PC-3 (cell line): ENCODE measurements at regions of chr6 and their contacts with region 1.

Region 1: DNA sequence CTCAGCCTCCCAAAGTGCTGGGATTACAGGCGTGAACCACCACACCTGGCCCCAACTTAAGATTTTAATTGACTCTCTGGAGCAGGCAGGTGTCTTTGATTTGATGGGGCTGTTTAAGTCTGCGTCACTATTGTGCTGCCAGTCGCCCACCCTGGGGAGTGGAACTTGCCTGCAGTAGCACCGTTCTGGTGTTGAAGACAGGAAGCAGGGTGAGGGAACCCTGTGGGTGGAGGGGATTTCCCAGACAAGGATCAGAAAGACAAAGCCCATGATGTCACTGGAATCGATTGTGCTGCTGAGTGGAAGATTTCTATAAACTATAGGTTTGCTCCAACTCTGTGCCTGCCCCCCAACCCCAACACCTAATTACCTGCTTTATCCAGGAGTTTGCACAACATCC is 11.0 kb downstream of the ALDH8A1 start:
- DNase-seq: no peak
- ATAC-seq: no peak
- H3K4me3 ChIP-seq: no peak overlapping the region
- H3K27ac ChIP-seq: no peak overlapping the region
- H3K4me1 ChIP-seq: peaks cover 8% of the 10 kb centered on the region
- H3K27me3 ChIP-seq: no peaks in the 10 kb centered on the region
- CTCF ChIP-seq: no peak

Region 2: DNA sequence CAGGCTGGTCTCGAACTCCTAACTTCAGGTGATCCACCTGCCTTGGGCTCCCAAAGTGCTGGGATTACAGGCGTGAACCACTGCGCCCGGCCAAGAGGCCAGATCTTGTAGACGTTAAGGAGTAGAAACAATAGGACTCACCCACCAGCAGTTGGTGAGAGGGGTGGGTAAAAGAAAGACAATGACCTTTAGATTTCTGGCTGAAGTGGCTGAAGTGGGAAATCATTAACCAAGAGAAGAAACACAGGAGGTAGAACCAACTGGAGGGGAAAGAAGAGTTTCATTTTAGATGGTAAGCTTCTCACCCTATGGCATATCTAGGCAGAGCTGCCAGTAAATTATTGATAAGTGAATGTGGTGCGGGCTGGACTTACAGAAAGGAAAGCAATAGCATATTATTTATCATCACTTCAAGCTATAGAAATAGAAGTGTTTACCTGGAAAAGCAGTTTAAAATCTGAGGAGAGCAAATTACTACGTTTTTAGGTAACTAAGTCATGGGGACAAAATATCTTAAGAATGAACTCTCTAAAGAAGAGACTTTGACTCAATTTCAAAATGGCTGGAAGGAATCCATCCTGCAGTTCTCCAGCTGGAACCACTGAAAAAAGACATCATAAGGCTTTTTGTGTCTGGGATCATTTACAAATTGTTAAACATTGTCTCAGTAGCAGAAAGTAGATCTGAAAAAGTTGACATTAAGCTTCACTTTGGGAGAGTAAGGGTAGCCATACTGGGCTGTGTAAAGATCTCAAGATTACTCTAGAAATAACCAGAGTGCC is 98.6 kb before region 1 on chr6:
- CTCF ChIA-PET with region 1: no interaction called
- POLR2A ChIA-PET with region 1: no interaction called
- intact Hi-C with region 1: no loop called
- DNase-seq: no peak
- ATAC-seq: no peak
- H3K4me3 ChIP-seq: no peak overlapping the region
- H3K27ac ChIP-seq: no peak overlapping the region
- H3K4me1 ChIP-seq: no peaks in the 10 kb centered on the region
- H3K27me3 ChIP-seq: no peaks in the 10 kb centered on the region
- CTCF ChIP-seq: no peak

Region 3: DNA sequence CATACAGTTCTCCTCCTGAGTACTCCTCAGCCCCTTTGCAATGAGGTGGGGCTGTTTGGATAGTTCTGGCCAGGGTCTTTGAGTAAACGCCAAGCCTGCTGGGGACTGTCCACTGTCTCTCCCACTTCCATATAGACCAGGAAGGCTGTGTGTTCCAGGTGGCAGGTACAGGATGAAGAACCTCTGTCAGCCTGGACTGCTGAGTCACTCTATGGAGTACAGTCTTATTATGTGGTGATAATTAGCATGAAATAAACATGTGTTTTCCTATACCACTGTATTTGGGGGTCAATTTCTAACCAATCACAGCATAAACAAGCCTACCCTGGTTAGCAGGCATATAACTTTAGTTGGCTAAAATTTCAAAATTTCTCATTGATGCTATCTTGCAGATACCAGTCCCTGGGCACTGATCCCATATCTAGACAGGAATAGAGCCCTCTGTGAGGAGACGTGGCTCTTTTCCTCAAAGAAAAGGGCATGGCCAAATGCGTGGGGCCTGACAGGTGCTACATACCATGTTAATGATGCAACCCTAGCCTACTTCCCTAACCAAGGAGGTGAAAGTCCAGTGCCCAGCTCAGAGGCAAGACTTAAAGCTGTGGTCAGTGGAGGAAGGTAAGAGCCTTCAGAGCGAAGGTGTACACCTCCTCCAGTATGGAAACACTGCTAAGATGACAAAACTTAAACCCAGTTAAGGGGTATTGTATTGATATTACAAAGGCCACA is 15.5 kb after region 1 on chr6:
- CTCF ChIA-PET with region 1: no interaction called
- POLR2A ChIA-PET with region 1: no interaction called
- intact Hi-C with region 1: loop called (anchors 1 kb)
- DNase-seq: no peak
- ATAC-seq: no peak
- H3K4me3 ChIP-seq: no peak overlapping the region
- H3K27ac ChIP-seq: no peak overlapping the region
- H3K4me1 ChIP-seq: no peaks in the 10 kb centered on the region
- H3K27me3 ChIP-seq: no peaks in the 10 kb centered on the region
- CTCF ChIP-seq: no peak

Region 4: GRCh38 chr6:135170849-135171248 is 232.0 kb after region 1 on chr6:
- CTCF ChIA-PET with region 1: no interaction called
- POLR2A ChIA-PET with region 1: no interaction called
- intact Hi-C with region 1: no loop called
- DNase-seq: peak; percentile 21
- ATAC-seq: no peak
- H3K4me3 ChIP-seq: no peak overlapping the region
- H3K27ac ChIP-seq: no peak overlapping the region
- H3K4me1 ChIP-seq: no peaks in the 10 kb centered on the region
- H3K27me3 ChIP-seq: no peaks in the 10 kb centered on the region
- CTCF ChIP-seq: no peak